ENCODE measurements at regions of chr1 and their contacts with region 1.

Region 1: GRCh38 chr1:198937231-198938031 is 298.6 kb downstream of the PTPRC start:
- DNase-seq: peak; percentile 75 to 93 (median 90)
- H3K4me3 ChIP-seq: peak overlapping the region; percentile 77 to 100 (median 93)
- H3K4me3 Mint-ChIP-seq: no peak overlapping the region
- H3K27ac ChIP-seq: peak overlapping the region; percentile 77 to 90
- H3K27ac Mint-ChIP-seq: peak overlapping the region in 6 of 7 donors; percentile 91 to 96 (median 94)
- H3K4me1 ChIP-seq: peaks cover 8 to 26% of the 10 kb centered on the region in 2 donors
- H3K4me1 Mint-ChIP-seq: peaks cover 15% of the 10 kb centered on the region
- H3K27me3 ChIP-seq: no peaks in the 10 kb centered on the region
- H3K27me3 Mint-ChIP-seq: no peaks in the 10 kb centered on the region
- CTCF ChIP-seq: no peak

Region 2: DNA sequence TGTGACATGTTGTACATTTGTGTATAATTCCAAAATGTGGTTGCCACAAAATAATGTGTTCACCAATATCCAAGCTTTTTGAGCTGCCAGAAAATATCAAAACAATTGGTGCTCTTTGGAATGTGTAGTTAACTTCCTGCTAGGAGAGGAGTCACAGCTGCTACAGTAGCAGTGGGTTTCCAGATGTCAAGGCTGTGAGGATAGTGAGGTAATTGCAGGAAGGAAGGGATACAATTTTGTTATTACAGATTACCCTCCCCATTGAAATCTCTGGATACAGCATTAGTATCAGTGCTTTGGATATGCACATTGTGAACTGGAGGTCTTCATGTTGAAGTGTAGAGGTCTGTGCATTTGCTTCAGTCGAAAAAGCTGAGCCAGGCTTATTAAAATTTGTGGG is 45.4 kb before region 1 on chr1:
- intact Hi-C with region 1: loop called in 1 of 2 experiments (anchors 10 kb)
- DNase-seq: no peak
- H3K4me3 ChIP-seq: no peak overlapping the region
- H3K4me3 Mint-ChIP-seq: no peak overlapping the region
- H3K27ac ChIP-seq: no peak overlapping the region
- H3K27ac Mint-ChIP-seq: no peak overlapping the region
- H3K4me1 ChIP-seq: peaks cover 6 to 17% of the 10 kb centered on the region in 2 donors
- H3K4me1 Mint-ChIP-seq: peaks cover 18% of the 10 kb centered on the region
- H3K27me3 ChIP-seq: no peaks in the 10 kb centered on the region
- H3K27me3 Mint-ChIP-seq: no peaks in the 10 kb centered on the region
- CTCF ChIP-seq: no peak

Region 3: DNA sequence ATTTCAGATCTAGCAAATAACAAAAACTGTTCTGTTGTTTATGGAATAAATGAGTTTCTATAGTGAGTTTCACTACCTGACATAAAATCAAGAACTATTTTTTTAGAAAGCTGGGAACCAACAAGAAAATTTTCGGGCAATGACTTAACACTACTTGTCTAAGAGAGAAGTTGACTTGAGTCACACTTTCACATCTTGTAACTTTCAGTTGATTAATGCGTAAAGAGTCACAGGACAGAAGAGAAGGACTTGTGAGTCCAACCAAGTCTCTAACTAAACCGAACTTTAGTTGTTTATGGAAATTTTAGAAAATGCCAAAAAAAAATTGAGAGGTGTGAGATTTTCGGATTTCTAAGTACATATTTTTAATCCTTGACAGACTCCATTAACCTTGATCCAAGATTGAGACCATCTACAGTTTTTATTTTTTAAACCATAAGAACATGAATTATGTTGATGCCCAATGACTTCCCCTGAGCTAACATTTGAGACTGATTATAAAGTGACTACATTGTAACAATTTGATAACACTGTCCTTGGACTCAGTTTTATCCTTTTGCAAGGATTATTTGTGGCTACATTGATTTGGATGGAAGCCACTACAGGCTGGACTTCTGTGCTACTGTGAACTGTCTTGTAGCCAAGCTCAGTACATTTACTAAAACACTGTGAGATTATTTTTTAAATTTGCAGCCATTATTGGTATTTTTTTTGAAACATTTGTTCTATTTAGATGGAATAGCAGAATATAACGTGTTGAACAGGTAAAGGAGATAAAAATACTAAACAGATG is 14.6 kb before region 1 on chr1:
- intact Hi-C with region 1: loop called in 1 of 2 experiments (anchors 2 kb)
- DNase-seq: peak; percentile 83 to 97 (median 96)
- H3K4me3 ChIP-seq: peak overlapping the region in 1 of 3 experiments; percentile 48
- H3K4me3 Mint-ChIP-seq: peak overlapping the region in 1 of 2 donors; percentile 70
- H3K27ac ChIP-seq: peak overlapping the region; percentile 91
- H3K27ac Mint-ChIP-seq: peak overlapping the region; percentile 93 to 98 (median 94)
- H3K4me1 ChIP-seq: peaks cover 53 to 67% of the 10 kb centered on the region in 2 donors
- H3K4me1 Mint-ChIP-seq: peaks cover 57% of the 10 kb centered on the region
- H3K27me3 ChIP-seq: no peaks in the 10 kb centered on the region
- H3K27me3 Mint-ChIP-seq: no peaks in the 10 kb centered on the region
- CTCF ChIP-seq: no peak

Region 4: GRCh38 chr1:199009447-199009846 is 72.0 kb after region 1 on chr1:
- intact Hi-C with region 1: loop called in 1 of 2 experiments (anchors 5 kb)
- DNase-seq: no peak
- H3K4me3 ChIP-seq: no peak overlapping the region
- H3K4me3 Mint-ChIP-seq: peak overlapping the region in 1 of 2 donors; percentile 24
- H3K27ac ChIP-seq: peak overlapping the region in 1 of 2 donors; percentile 36
- H3K27ac Mint-ChIP-seq: peak overlapping the region in 1 of 7 donors; percentile 36
- H3K4me1 ChIP-seq: peaks cover 17 to 24% of the 10 kb centered on the region in 2 donors
- H3K4me1 Mint-ChIP-seq: peaks cover 21% of the 10 kb centered on the region
- H3K27me3 ChIP-seq: no peaks in the 10 kb centered on the region
- H3K27me3 Mint-ChIP-seq: peaks cover 0 to 1% (median 0%) of the 10 kb centered on the region in 3 donors
- CTCF ChIP-seq: no peak

Region 5: GRCh38 chr1:199084293-199084692 is 146.9 kb after region 1 on chr1:
- intact Hi-C with region 1: no loop called
- DNase-seq: no peak
- H3K4me3 ChIP-seq: no peak overlapping the region
- H3K4me3 Mint-ChIP-seq: no peak overlapping the region
- H3K27ac ChIP-seq: no peak overlapping the region
- H3K27ac Mint-ChIP-seq: no peak overlapping the region
- H3K4me1 ChIP-seq: peaks cover 0 to 3% of the 10 kb centered on the region in 2 donors
- H3K4me1 Mint-ChIP-seq: peaks cover 5% of the 10 kb centered on the region
- H3K27me3 ChIP-seq: no peaks in the 10 kb centered on the region
- H3K27me3 Mint-ChIP-seq: no peaks in the 10 kb centered on the region
- CTCF ChIP-seq: no peak

Region 6: GRCh38 chr1:199287647-199288046 is 350.2 kb after region 1 on chr1:
- intact Hi-C with region 1: no loop called
- DNase-seq: no peak
- H3K4me3 ChIP-seq: no peak overlapping the region
- H3K4me3 Mint-ChIP-seq: no peak overlapping the region
- H3K27ac ChIP-seq: no peak overlapping the region
- H3K27ac Mint-ChIP-seq: no peak overlapping the region
- H3K4me1 ChIP-seq: no peaks in the 10 kb centered on the region
- H3K4me1 Mint-ChIP-seq: peaks cover 12% of the 10 kb centered on the region
- H3K27me3 ChIP-seq: no peaks in the 10 kb centered on the region
- H3K27me3 Mint-ChIP-seq: peaks cover 0 to 2% (median 0%) of the 10 kb centered on the region in 3 donors
- CTCF ChIP-seq: no peak

Measured in CD14-positive monocyte (primary cell).